ENCODE measurements at regions of chr4 and their contacts with region 1.

Region 1: GRCh38 chr4:173301518-173302201 is 32.5 kb downstream of the HMGB2 start:
- DNase-seq: no peak
- H3K4me3 Mint-ChIP-seq: no peak overlapping the region
- H3K27ac Mint-ChIP-seq: no peak overlapping the region
- H3K4me1 Mint-ChIP-seq: peaks cover 3% of the 10 kb centered on the region
- H3K27me3 Mint-ChIP-seq: no peaks in the 10 kb centered on the region

Region 2: GRCh38 chr4:171433674-171434073 is 1868.0 kb before region 1 on chr4:
- CTCF ChIA-PET with region 1: no interaction called
- POLR2A ChIA-PET with region 1: no interaction called
- intact Hi-C with region 1: no loop called
- DNase-seq: no peak
- H3K4me3 Mint-ChIP-seq: no peak overlapping the region
- H3K27ac Mint-ChIP-seq: no peak overlapping the region
- H3K4me1 Mint-ChIP-seq: no peaks in the 10 kb centered on the region
- H3K27me3 Mint-ChIP-seq: no peaks in the 10 kb centered on the region

Region 3: GRCh38 chr4:173025131-173025530 is 276.5 kb before region 1 on chr4:
- CTCF ChIA-PET with region 1: interaction called, 16 read pairs
- POLR2A ChIA-PET with region 1: no interaction called
- intact Hi-C with region 1: loop called (anchors 1 kb)
- DNase-seq: no peak
- H3K4me3 Mint-ChIP-seq: no peak overlapping the region
- H3K27ac Mint-ChIP-seq: no peak overlapping the region
- H3K4me1 Mint-ChIP-seq: no peaks in the 10 kb centered on the region
- H3K27me3 Mint-ChIP-seq: no peaks in the 10 kb centered on the region

Region 4: GRCh38 chr4:173288296-173288695 is 13.4 kb before region 1 on chr4:
- CTCF ChIA-PET with region 1: interaction called, 43 read pairs
- POLR2A ChIA-PET with region 1: no interaction called
- intact Hi-C with region 1: loop called (anchors 1 kb)
- DNase-seq: peak; percentile 76
- H3K4me3 Mint-ChIP-seq: no peak overlapping the region
- H3K27ac Mint-ChIP-seq: no peak overlapping the region
- H3K4me1 Mint-ChIP-seq: peaks cover 13% of the 10 kb centered on the region
- H3K27me3 Mint-ChIP-seq: no peaks in the 10 kb centered on the region

Region 5: GRCh38 chr4:173370477-173371291 is 69.0 kb after region 1 on chr4 and contains the start of gene SAP30:
- CTCF ChIA-PET with region 1: interaction called, 10 read pairs
- POLR2A ChIA-PET with region 1: no interaction called
- intact Hi-C with region 1: no loop called
- DNase-seq: peak; percentile 99
- H3K4me3 Mint-ChIP-seq: peak within 1 kb of the TSS; percentile 100
- H3K27ac Mint-ChIP-seq: peak within 1 kb of the TSS; percentile 99
- H3K4me1 Mint-ChIP-seq: peaks cover 33% of the 10 kb centered on the region
- H3K27me3 Mint-ChIP-seq: peaks cover 4% of the 10 kb centered on the region
- total RNA-seq, gene SAP30: 26.1 to 26.5 TPM